ENCODE measurements at regions of chr1 and their contacts with region 1.

Region 1: DNA sequence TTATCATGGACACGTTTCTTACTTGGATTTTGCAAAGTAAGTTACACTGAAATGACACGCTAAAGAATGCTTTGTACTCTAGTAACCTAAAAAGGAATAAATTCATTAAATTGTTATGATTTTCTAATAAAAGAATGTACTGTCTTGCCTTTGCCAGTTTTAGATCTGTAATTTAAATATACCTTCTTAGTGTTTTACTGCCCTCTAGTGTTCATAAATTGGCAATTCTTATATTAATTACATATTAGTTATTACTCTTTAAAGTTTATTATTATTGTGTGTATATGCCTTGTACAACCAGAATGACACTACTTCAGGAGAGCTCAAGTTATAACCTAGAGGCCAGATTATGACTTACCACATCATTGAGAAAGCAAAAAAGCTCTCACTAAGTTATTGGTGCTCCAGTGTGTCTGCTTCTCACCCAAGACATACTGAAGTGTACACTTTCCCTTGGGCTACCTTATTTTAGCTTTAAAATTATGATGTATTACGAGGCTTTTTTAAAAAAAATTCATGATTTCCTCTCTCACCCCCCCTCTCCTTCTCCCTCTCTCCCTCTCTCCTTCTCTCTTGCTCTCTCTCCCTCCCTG is 169.9 kb downstream of the HS2ST1 start:
- DNase-seq: peak in 1 of 2 experiments; percentile 40
- H3K4me3 ChIP-seq: no peak overlapping the region
- H3K4me1 ChIP-seq: peaks cover 12% of the 10 kb centered on the region
- H3K27me3 ChIP-seq: no peaks in the 10 kb centered on the region

Region 2: GRCh38 chr1:86833461-86834215 is 250.7 kb before region 1 on chr1:
- in situ Hi-C with region 1: loop called (anchors 10 kb)
- DNase-seq: peak; percentile 88 to 95
- H3K4me3 ChIP-seq: no peak overlapping the region
- H3K4me1 ChIP-seq: peaks cover 5% of the 10 kb centered on the region; the same call in 1 of the 2 replicates
- H3K27me3 ChIP-seq: no peaks in the 10 kb centered on the region

Region 3: GRCh38 chr1:86981482-86982213 is 102.7 kb before region 1 on chr1:
- in situ Hi-C with region 1: no loop called
- DNase-seq: no peak
- H3K4me3 ChIP-seq: no peak overlapping the region
- H3K4me1 ChIP-seq: peaks cover 12% of the 10 kb centered on the region
- H3K27me3 ChIP-seq: no peaks in the 10 kb centered on the region

Region 4: DNA sequence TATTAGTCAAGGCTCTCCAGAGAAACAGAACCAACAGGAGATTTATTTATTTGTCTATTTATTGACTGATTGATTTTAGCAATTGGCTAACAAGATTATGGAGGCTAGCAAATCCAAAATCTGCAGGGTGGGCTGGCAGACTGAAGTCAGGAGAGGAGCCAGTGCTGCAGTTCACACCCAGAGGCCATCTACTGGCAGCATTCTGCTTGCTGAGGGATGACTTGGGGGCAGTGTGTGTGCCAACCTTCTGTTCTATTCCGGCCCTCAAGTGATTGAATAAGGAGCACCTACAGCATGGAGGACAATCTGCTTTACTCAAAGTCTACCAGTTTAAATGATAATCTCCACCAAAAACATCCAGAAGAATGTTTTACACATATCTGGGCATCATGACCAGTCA is 181.9 kb after region 1 on chr1:
- in situ Hi-C with region 1: no loop called
- DNase-seq: no peak
- H3K4me3 ChIP-seq: no peak overlapping the region
- H3K4me1 ChIP-seq: peaks cover 10% of the 10 kb centered on the region
- H3K27me3 ChIP-seq: no peaks in the 10 kb centered on the region

Region 5: GRCh38 chr1:87869567-87869966 is 785.2 kb after region 1 on chr1:
- in situ Hi-C with region 1: no loop called
- DNase-seq: no peak
- H3K4me3 ChIP-seq: no peak overlapping the region
- H3K4me1 ChIP-seq: no peaks in the 10 kb centered on the region
- H3K27me3 ChIP-seq: peaks cover 3% of the 10 kb centered on the region; the same call in 1 of the 2 replicates